ENCODE measurements at regions of chr3 and their contacts with region 1.

Region 1: DNA sequence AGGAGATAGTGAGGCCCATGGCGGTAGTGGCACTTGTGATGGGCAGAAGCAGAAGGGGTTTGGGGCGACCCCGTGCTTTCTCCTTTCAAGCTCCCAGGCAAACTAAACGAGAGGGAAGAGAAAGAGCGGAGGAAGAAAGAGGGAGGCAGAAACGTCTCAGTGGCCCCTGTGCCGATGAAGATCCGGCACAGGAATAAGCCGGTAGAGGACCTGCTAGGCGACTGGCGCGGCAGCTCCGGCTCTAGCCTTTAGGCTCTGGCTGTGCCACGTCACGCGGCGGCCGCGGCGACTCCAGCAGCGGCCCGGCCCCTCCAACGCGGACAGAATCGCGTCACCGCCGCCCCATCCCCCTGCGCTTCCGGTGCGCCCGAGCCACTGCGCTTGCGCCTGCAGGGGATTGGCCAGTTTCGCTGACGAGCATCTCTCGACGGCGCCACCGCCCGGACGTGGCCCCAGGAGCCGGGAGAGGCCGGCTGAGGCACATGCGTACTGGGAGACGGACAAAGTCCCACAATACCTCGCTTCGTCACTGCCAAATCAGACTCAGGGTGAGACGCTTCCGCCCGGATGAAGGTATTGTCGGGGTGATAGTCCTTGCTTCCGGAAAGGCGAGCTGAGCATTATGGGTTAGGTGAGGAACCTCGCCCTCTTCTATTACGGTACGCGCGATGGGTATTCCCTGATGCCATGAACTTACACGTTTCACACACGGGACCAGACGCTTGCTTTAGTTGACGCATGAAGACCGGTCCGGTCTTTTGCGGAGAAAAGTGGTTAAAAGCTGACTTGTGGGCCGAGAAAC is at the start of gene ARF4:
- DNase-seq: peak; percentile 100
- H3K4me3 ChIP-seq: peak within 1 kb of the TSS; percentile 64 to 88
- H3K27ac ChIP-seq: peak within 1 kb of the TSS; percentile 89
- H3K4me1 ChIP-seq: peaks cover 50% of the 10 kb centered on the region
- H3K27me3 ChIP-seq: no peaks in the 10 kb centered on the region
- CTCF ChIP-seq: no peak
- POLR2A ChIP-seq: peak in 1 of 2 donors; percentile 98
- total RNA-seq, gene ARF4: 69.0 TPM

Region 2: DNA sequence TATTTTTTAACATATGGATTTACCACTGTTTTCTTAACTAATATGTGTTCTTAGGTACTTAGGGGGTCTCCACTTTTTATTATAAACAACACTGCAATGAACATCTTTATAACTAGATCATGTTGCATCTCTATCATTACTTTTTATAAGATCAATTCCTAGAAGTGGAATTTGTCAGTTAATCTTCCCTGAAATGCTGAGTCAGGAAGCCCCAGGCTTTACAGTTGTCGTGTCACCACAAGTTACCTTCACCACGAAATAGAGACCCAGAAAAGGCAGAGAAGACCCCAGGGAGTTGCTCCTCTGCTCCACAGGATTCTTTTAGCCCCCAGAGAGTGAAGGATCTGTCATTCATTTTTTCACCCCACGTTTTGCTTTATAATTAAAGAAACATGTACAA is 1094.6 kb before region 1 on chr3:
- intact Hi-C with region 1: no loop called
- DNase-seq: no peak
- H3K4me3 ChIP-seq: no peak overlapping the region
- H3K27ac ChIP-seq: no peak overlapping the region
- H3K4me1 ChIP-seq: no peaks in the 10 kb centered on the region
- H3K27me3 ChIP-seq: no peaks in the 10 kb centered on the region
- CTCF ChIP-seq: no peak
- POLR2A ChIP-seq: no peak

Region 3: GRCh38 chr3:57555738-57556458 is 41.4 kb before region 1 on chr3 and contains the start of gene PDE12:
- intact Hi-C with region 1: loop called (anchors 5 kb)
- DNase-seq: peak in 1 of 2 donors; percentile 91
- H3K4me3 ChIP-seq: peak within 1 kb of the TSS; percentile 78 to 87
- H3K27ac ChIP-seq: peak within 1 kb of the TSS; percentile 82
- H3K4me1 ChIP-seq: peaks cover 39% of the 10 kb centered on the region
- H3K27me3 ChIP-seq: no peaks in the 10 kb centered on the region
- CTCF ChIP-seq: no peak
- POLR2A ChIP-seq: no peak
- total RNA-seq, gene PDE12: 12.0 TPM

Region 4: DNA sequence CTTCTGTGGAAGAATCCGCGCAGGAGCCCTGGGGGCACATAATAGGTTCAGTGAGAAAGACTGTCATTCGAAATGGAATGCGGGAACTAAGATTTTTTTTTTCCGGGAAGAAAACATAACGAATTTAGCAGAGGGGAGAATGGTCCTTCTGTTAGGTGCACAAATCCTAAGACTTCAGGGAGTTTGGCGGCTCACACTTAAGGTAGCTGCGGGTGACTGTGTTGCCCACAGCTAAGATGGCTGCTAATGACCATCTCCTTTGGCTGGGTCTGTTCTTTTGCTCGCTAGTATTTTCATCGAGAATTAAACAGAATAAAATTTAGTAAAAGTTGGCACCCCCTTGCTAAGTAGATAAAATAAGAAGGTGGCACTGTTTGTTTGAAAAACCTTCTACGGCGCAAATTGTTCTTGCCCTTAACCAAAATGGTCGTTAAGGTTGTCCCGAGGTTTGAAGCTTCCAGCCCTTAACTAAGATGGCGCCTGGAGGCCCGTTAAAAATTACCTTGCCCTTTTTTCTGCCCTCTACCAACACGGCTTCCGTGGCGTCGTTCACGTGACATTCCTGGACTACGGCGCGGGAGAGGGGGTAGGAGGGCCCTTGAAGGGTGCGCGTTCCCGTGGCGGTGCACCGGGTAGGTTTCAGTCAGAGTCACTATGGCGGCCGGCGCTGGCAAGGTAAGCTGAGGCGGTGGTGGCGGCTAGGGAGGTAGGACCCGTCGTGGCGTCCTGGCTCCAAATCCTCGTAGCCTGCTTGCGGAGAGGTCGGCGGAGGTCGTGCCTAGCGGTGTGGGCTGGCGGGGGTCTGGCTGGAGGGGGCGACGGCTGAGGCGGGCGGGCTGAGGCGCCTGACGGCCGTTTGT is 158.6 kb after region 1 on chr3 and contains the start of gene SLMAP:
- intact Hi-C with region 1: loop called (anchors 5 kb)
- DNase-seq: peak; percentile 98
- H3K4me3 ChIP-seq: peak within 1 kb of the TSS; percentile 61 to 96
- H3K27ac ChIP-seq: peak within 1 kb of the TSS; percentile 92
- H3K4me1 ChIP-seq: peaks cover 48% of the 10 kb centered on the region
- H3K27me3 ChIP-seq: no peaks in the 10 kb centered on the region
- CTCF ChIP-seq: no peak
- POLR2A ChIP-seq: peak in 1 of 2 donors; percentile 51
- total RNA-seq, gene SLMAP: 102 TPM

Measured in vagina (tissue), 2 donors.